Prostate gland (tissue), 2 donors: ENCODE measurements at regions of chr3 and their contacts with region 1.

Region 1: GRCh38 chr3:127817396-127817841 is 4.9 kb downstream of the MGLL start:
- DNase-seq: no peak
- H3K4me3 ChIP-seq: no peak overlapping the region
- H3K27ac ChIP-seq: no peak overlapping the region
- H3K4me1 ChIP-seq: peaks cover 8% of the 10 kb centered on the region
- H3K27me3 ChIP-seq: no peaks in the 10 kb centered on the region
- CTCF ChIP-seq: no peak
- POLR2A ChIP-seq: no peak

Region 2: GRCh38 chr3:127590593-127591477 is 226.6 kb before region 1 on chr3 and contains the start of gene TPRA1:
- intact Hi-C with region 1: loop called (anchors 10 kb)
- DNase-seq: peak; percentile 92
- H3K4me3 ChIP-seq: peak within 1 kb of the TSS; percentile 56 to 98
- H3K27ac ChIP-seq: peak within 1 kb of the TSS; percentile 87
- H3K4me1 ChIP-seq: peaks cover 16% of the 10 kb centered on the region
- H3K27me3 ChIP-seq: no peaks in the 10 kb centered on the region
- CTCF ChIP-seq: peak in 3 of 4 experiments; percentile 17 to 43 (median 41)
- POLR2A ChIP-seq: peak; percentile 62
- total RNA-seq, gene TPRA1: 46.6 to 73.1 TPM

Region 3: GRCh38 chr3:127844326-127844942 is 27.0 kb after region 1 on chr3:
- intact Hi-C with region 1: no loop called
- DNase-seq: no peak
- H3K4me3 ChIP-seq: no peak overlapping the region
- H3K27ac ChIP-seq: no peak overlapping the region
- H3K4me1 ChIP-seq: no peaks in the 10 kb centered on the region
- H3K27me3 ChIP-seq: no peaks in the 10 kb centered on the region
- CTCF ChIP-seq: no peak
- POLR2A ChIP-seq: no peak